IMR-90 (cell line): ENCODE measurements at regions of chr12 and their contacts with region 1.

Region 1: GRCh38 chr12:98653866-98654493 is 8.9 kb downstream of the APAF1 start:
- DNase-seq: peak; percentile 70
- ATAC-seq: peak; percentile 80
- H3K4me3 ChIP-seq: no peak overlapping the region
- H3K27ac ChIP-seq: no peak overlapping the region
- H3K4me1 ChIP-seq: no peaks in the 10 kb centered on the region
- H3K27me3 ChIP-seq: no peaks in the 10 kb centered on the region
- CTCF ChIP-seq: peak; percentile 82
- POLR2A ChIP-seq: no peak
- RAD21 ChIP-seq: peak; percentile 91

Region 2: GRCh38 chr12:98418357-98419075 is 235.5 kb before region 1 on chr12:
- CTCF ChIA-PET with region 1: interaction called, 3 read pairs
- POLR2A ChIA-PET with region 1: no interaction called
- dilution Hi-C with region 1: no loop called
- in situ Hi-C with region 1: loop called (anchors 10 kb)
- intact Hi-C with region 1: no loop called
- DNase-seq: peak; percentile 93
- ATAC-seq: peak; percentile 93
- H3K4me3 ChIP-seq: peak overlapping the region; percentile 18; the same call in 1 of the 2 replicates
- H3K27ac ChIP-seq: peak overlapping the region; percentile 74
- H3K4me1 ChIP-seq: peaks cover 11% of the 10 kb centered on the region
- H3K27me3 ChIP-seq: no peaks in the 10 kb centered on the region
- CTCF ChIP-seq: no peak
- POLR2A ChIP-seq: no peak
- RAD21 ChIP-seq: no peak

Region 3: DNA sequence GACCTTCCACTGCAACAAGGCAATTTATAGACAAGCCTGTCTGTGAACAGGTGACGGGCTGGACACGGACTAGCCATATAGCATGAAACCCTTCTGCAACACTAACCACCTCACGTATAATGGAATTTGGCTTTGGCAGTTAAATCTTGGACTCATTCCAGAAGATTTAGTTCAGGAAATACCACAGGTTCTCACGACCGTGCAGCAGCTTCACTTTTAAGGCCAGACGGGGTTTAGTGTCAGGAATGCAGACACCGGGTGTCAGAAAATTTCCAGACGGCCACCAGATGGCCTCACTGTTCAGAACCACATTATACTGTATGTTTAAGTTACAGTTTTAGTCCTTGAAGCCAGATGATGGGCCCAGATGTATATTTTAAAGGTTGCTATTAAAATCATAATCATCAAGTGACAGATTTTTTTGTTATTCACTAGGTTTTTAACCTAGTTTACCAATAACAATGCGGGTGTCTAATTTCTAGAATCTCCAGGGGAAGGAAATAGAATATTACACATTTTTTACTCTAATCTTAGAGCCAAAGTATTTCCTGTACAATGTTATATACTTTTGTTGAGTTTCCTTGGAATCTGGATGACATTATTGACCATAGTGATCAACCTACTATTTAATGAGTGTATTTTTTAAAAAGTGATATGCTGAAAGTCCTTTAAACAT is 229.1 kb before region 1 on chr12:
- CTCF ChIA-PET with region 1: no interaction called
- POLR2A ChIA-PET with region 1: no interaction called
- dilution Hi-C with region 1: no loop called
- in situ Hi-C with region 1: no loop called
- intact Hi-C with region 1: loop called (anchors 2 kb)
- DNase-seq: peak; percentile 73
- ATAC-seq: peak; percentile 94
- H3K4me3 ChIP-seq: no peak overlapping the region
- H3K27ac ChIP-seq: no peak overlapping the region
- H3K4me1 ChIP-seq: peaks cover 2% of the 10 kb centered on the region; the same call in 1 of the 2 replicates
- H3K27me3 ChIP-seq: no peaks in the 10 kb centered on the region; the same call in 1 of the 2 replicates
- CTCF ChIP-seq: peak; percentile 75
- POLR2A ChIP-seq: no peak
- RAD21 ChIP-seq: peak; percentile 63

Region 4: DNA sequence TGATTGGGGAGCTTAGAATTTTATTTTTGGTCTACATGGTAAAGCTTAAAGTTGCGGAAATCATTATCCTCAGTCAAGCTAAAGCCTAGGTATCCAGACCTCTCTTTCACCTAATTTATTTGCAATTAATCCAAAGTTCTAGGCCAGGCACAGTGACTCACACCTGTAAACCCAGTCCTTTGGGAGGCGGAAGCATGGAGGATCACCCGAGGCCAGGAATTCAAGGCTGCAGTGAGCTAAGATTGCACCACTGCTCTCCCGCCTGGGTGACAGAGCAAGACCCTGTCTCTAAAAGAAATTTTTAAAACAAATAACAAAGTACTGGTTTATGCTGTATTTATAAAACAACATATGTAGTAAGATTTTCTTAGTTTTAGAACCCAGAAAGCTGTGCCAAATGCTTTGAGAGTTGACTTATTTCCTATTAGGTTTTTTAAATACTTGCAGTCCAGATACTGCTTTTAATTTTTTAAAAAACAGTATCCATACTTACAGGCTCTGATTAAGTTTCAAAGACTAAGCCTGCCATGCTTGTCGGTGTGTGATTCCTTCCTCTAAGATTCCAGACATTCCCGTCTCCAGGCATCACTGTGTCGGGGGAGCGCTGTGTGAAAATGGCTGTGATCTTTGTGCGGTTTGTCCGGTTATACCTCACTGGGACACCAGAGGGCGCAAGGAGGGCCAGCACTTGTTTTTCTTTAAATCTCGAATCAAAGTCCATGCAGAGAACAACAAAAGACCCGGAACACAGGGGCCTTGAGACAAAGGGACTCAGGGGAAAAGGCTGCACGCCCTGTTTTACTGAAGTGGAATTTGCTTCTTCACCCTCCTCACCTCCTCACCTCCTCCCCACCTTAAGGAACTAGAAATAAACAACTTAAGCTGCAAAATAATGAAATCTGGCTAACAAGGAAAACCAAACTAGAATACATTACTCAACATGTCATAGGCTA is 163.2 kb before region 1 on chr12:
- CTCF ChIA-PET with region 1: no interaction called
- POLR2A ChIA-PET with region 1: no interaction called
- dilution Hi-C with region 1: no loop called
- in situ Hi-C with region 1: no loop called
- intact Hi-C with region 1: loop called (anchors 1 kb)
- DNase-seq: peak; percentile 90
- ATAC-seq: peak; percentile 100
- H3K4me3 ChIP-seq: no peak overlapping the region
- H3K27ac ChIP-seq: peak overlapping the region; percentile 87
- H3K4me1 ChIP-seq: no peaks in the 10 kb centered on the region
- H3K27me3 ChIP-seq: no peaks in the 10 kb centered on the region
- CTCF ChIP-seq: peak; percentile 93
- POLR2A ChIP-seq: no peak
- RAD21 ChIP-seq: peak; percentile 68

Region 5: GRCh38 chr12:98572010-98572409 is 82.0 kb before region 1 on chr12:
- CTCF ChIA-PET with region 1: interaction called, 6 read pairs
- POLR2A ChIA-PET with region 1: no interaction called
- dilution Hi-C with region 1: no loop called
- in situ Hi-C with region 1: no loop called
- intact Hi-C with region 1: loop called (anchors 2 kb)
- DNase-seq: no peak
- ATAC-seq: no peak
- H3K4me3 ChIP-seq: no peak overlapping the region
- H3K27ac ChIP-seq: no peak overlapping the region
- H3K4me1 ChIP-seq: no peaks in the 10 kb centered on the region
- H3K27me3 ChIP-seq: no peaks in the 10 kb centered on the region
- CTCF ChIP-seq: 0 out of 2 replicates have a peak, but pooled peaks have one; percentile 1
- POLR2A ChIP-seq: no peak
- RAD21 ChIP-seq: no peak

Region 6: GRCh38 chr12:98606357-98606988 is 47.5 kb before region 1 on chr12:
- CTCF ChIA-PET with region 1: no interaction called
- POLR2A ChIA-PET with region 1: no interaction called
- dilution Hi-C with region 1: no loop called
- in situ Hi-C with region 1: no loop called
- intact Hi-C with region 1: loop called (anchors 5 kb)
- DNase-seq: no peak
- ATAC-seq: 0 out of 2 replicates have a peak, but pooled peaks have one; percentile 19
- H3K4me3 ChIP-seq: no peak overlapping the region
- H3K27ac ChIP-seq: no peak overlapping the region
- H3K4me1 ChIP-seq: no peaks in the 10 kb centered on the region
- H3K27me3 ChIP-seq: no peaks in the 10 kb centered on the region
- CTCF ChIP-seq: 0 out of 2 replicates have a peak, but pooled peaks have one; percentile 9
- POLR2A ChIP-seq: no peak
- RAD21 ChIP-seq: no peak

Region 7: GRCh38 chr12:98698603-98699463 is 44.9 kb after region 1 on chr12:
- CTCF ChIA-PET with region 1: no interaction called
- POLR2A ChIA-PET with region 1: no interaction called
- dilution Hi-C with region 1: no loop called
- in situ Hi-C with region 1: no loop called
- intact Hi-C with region 1: no loop called
- DNase-seq: peak; percentile 59
- ATAC-seq: peak; percentile 91
- H3K4me3 ChIP-seq: no peak overlapping the region
- H3K27ac ChIP-seq: no peak overlapping the region
- H3K4me1 ChIP-seq: peaks cover 2% of the 10 kb centered on the region; the same call in 1 of the 2 replicates
- H3K27me3 ChIP-seq: no peaks in the 10 kb centered on the region
- CTCF ChIP-seq: peak; percentile 55
- POLR2A ChIP-seq: no peak
- RAD21 ChIP-seq: peak; percentile 66